ENCODE measurements at regions of chr6 and their contacts with region 1.

Region 1: GRCh38 chr6:159042003-159042825 is 2.6 kb downstream of the TAGAP start:
- DNase-seq: peak; percentile 73
- H3K4me3 ChIP-seq: no peak overlapping the region
- H3K27ac ChIP-seq: no peak overlapping the region
- H3K4me1 ChIP-seq: no peaks in the 10 kb centered on the region
- H3K27me3 ChIP-seq: peaks cover 6% of the 10 kb centered on the region in 2 experiments
- CTCF ChIP-seq: peak; percentile 93 to 96
- POLR2A ChIP-seq: no peak

Region 2: GRCh38 chr6:159008656-159009288 is 33.4 kb before region 1 on chr6:
- CTCF ChIA-PET with region 1: interaction called, 12 read pairs
- POLR2A ChIA-PET with region 1: no interaction called
- dilution Hi-C with region 1: no loop called
- intact Hi-C with region 1: no loop called
- DNase-seq: peak; percentile 30
- H3K4me3 ChIP-seq: no peak overlapping the region
- H3K27ac ChIP-seq: no peak overlapping the region
- H3K4me1 ChIP-seq: no peaks in the 10 kb centered on the region
- H3K27me3 ChIP-seq: no peaks in the 10 kb centered on the region
- CTCF ChIP-seq: peak; percentile 14 to 21
- POLR2A ChIP-seq: no peak

Region 3: GRCh38 chr6:159056003-159056402 is 13.8 kb after region 1 on chr6:
- CTCF ChIA-PET with region 1: interaction called, 27 read pairs
- POLR2A ChIA-PET with region 1: no interaction called
- dilution Hi-C with region 1: no loop called
- intact Hi-C with region 1: no loop called
- DNase-seq: no peak
- H3K4me3 ChIP-seq: no peak overlapping the region
- H3K27ac ChIP-seq: no peak overlapping the region
- H3K4me1 ChIP-seq: no peaks in the 10 kb centered on the region
- H3K27me3 ChIP-seq: peaks cover 3 to 8% of the 10 kb centered on the region in 2 experiments
- CTCF ChIP-seq: no peak
- POLR2A ChIP-seq: no peak

Region 4: DNA sequence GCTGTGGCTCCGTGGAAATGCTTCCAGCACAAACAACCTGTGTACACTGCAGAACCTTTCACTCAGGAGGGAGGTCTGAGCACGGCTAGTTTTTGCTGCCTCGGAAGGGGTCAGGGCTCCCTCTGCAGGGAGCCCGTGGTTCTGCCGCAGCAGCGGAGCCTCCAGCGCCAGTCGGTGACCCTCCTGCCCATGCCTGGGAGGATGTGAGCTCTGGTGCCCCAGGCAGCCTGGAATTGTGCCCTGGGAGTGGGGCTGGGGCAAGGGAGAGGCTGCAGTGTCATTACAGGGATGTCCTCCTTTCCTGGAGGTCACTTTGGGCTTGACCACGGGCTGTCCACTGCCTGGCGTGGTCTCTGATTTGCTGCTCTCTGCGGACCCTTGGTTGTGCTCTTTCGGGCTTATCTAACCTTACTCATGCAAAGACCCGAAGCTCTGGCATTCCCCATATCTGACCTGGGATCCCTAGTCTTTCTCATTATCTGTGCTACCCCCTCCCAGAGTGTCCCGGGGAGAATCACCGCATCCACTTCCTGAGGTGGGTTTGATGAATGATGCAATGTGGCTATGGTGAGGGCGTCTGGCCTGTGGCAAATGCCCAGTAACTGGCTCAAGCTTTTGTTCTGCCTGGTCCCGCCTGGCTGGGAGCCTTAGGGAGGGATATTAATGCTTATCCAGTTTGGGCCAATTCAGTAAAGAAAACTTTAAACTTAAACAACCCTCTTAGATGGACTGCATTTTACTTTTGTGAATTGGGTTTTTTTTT is 62.1 kb after region 1 on chr6:
- CTCF ChIA-PET with region 1: interaction called, 12 read pairs
- POLR2A ChIA-PET with region 1: no interaction called
- dilution Hi-C with region 1: no loop called
- intact Hi-C with region 1: loop called (anchors 1 kb)
- DNase-seq: peak; percentile 40
- H3K4me3 ChIP-seq: no peak overlapping the region
- H3K27ac ChIP-seq: no peak overlapping the region
- H3K4me1 ChIP-seq: no peaks in the 10 kb centered on the region
- H3K27me3 ChIP-seq: peaks cover 0 to 2% of the 10 kb centered on the region in 2 experiments
- CTCF ChIP-seq: peak; percentile 77 to 96
- POLR2A ChIP-seq: no peak

Region 5: DNA sequence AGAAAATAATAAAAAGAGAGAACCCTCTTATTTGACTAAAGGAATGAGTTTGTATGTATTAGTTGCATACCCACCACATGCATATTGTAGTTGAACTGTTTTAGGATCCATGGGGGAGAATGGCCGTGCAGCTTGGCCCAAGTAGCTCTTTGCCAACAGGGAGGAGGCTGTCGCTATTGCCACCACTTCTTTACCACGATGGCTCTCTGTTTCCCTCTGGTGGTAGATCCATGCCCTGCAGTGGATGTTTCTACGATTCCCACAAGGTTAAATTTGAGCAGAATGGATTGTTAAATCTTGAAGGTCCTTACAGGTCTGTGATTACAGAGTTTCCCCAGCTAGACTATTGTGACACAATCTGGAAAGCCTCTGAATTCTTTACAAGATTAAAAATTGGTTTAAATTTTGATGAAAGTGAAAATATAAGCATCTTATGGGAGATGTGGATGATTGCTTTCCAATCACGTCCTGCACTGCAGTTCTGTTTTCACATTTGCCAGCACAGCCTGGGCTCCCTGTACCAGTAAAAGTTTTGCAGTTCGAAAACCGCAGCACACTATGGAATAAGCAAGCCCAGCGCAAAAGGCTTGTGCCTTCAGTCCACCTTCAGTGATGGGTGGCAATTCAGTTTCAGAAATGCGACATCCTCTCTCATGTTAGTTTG is 92.6 kb after region 1 on chr6:
- CTCF ChIA-PET with region 1: interaction called, 42 read pairs
- POLR2A ChIA-PET with region 1: no interaction called
- dilution Hi-C with region 1: no loop called
- intact Hi-C with region 1: loop called (anchors 1 kb)
- DNase-seq: peak; percentile 62
- H3K4me3 ChIP-seq: no peak overlapping the region
- H3K27ac ChIP-seq: no peak overlapping the region
- H3K4me1 ChIP-seq: no peaks in the 10 kb centered on the region
- H3K27me3 ChIP-seq: peaks cover 0 to 2% of the 10 kb centered on the region in 2 experiments
- CTCF ChIP-seq: peak; percentile 80 to 86
- POLR2A ChIP-seq: no peak

Region 6: DNA sequence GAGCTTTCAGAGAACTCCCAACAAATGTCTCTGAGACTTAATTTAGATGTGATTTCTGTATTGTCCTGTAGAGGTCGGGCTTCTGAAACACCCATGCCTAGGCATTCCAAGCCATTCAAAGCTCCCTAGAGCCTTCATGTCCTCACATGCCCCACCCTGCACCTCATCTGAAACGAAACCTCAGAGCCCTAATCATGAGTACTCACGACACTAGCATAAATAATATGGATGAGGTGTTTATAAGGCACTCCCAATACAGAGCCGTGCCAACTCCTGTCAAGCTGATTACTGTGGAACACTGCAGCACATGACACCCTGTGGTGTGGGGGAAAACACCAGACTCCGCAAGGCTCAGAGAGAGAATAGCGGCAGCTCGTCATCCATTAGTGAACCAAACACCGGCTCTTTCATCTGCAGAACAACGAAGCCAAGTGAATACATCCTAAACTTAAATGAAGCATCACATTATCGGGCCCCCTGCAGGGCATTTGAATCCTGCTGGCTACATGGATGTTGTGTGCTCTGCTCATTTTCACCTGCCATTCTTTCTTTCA is 210.8 kb after region 1 on chr6:
- CTCF ChIA-PET with region 1: no interaction called
- POLR2A ChIA-PET with region 1: no interaction called
- dilution Hi-C with region 1: no loop called
- intact Hi-C with region 1: no loop called
- DNase-seq: no peak
- H3K4me3 ChIP-seq: no peak overlapping the region
- H3K27ac ChIP-seq: no peak overlapping the region
- H3K4me1 ChIP-seq: no peaks in the 10 kb centered on the region
- H3K27me3 ChIP-seq: no peaks in the 10 kb centered on the region
- CTCF ChIP-seq: no peak
- POLR2A ChIP-seq: no peak

Measured in endothelial cell of umbilical vein (primary cell).